ENCODE measurements at regions of chr11 and their contacts with region 1.

Region 1: GRCh38 chr11:87037450-87038234 is at the start of gene TMEM135:
- DNase-seq: peak; percentile 94
- H3K4me3 ChIP-seq: peak within 1 kb of the TSS; percentile 32 to 70 (median 67)
- H3K27ac ChIP-seq: peak within 1 kb of the TSS; percentile 1
- H3K4me1 ChIP-seq: peaks cover 12% of the 10 kb centered on the region
- H3K27me3 ChIP-seq: no peaks in the 10 kb centered on the region
- CTCF ChIP-seq: no peak
- POLR2A ChIP-seq: peak; percentile 93
- total RNA-seq, gene TMEM135: 33.2 and 36.8 TPM in 2 replicates

Region 2: GRCh38 chr11:86811637-86812321 is 225.9 kb before region 1 on chr11:
- CTCF ChIA-PET with region 1: no interaction called
- POLR2A ChIA-PET with region 1: no interaction called
- dilution Hi-C with region 1: no loop called
- intact Hi-C with region 1: no loop called
- DNase-seq: peak; percentile 24
- H3K4me3 ChIP-seq: no peak overlapping the region
- H3K27ac ChIP-seq: no peak overlapping the region
- H3K4me1 ChIP-seq: peaks cover 32% of the 10 kb centered on the region
- H3K27me3 ChIP-seq: no peaks in the 10 kb centered on the region
- CTCF ChIP-seq: no peak
- POLR2A ChIP-seq: peak; percentile 49

Region 3: DNA sequence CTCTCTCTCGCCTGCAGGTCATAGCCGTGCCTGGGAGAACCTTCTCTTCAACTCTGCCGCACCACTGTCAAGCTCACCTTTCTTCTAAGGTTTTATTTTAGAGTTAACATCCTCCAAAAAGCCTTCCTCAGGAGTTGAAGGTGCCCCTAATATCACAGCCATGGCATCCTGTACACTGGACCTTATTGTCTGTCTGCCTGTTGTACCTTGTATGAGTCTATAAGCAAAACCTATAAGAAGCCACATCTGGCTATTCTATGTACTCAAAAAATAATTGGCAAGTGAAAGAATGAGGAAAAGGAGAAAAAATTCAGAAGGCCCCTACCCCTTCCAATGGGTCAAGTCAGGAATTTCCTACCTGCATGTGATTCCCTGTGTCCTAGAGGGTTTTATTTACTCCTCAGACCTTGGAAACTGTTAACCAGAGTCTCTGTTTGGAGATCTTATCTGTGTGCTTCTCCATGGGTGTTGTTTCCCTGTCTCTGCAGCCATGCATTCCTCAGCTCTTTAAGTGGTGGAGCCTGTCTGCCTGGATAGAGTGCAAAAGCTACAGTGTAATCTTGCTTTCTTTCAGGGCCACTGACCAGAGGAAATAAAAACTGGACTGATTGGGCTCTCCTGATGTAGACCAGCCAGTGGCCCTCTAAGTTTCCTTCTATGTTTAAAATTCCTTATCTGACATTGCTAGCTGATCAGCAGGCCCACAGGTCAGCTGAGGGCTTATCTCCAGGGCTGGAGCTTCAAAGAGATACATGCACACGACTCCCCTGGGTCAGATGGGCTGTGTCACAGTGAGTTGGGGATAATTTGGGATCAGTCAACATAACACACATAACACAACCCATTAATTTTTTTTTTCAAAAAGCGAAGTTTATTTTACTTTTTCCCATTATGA is 37.5 kb before region 1 on chr11:
- CTCF ChIA-PET with region 1: interaction called, 19 read pairs
- POLR2A ChIA-PET with region 1: interaction called, 14 read pairs
- dilution Hi-C with region 1: no loop called
- intact Hi-C with region 1: loop called (anchors 1 kb)
- DNase-seq: peak; percentile 31
- H3K4me3 ChIP-seq: no peak overlapping the region
- H3K27ac ChIP-seq: no peak overlapping the region
- H3K4me1 ChIP-seq: no peaks in the 10 kb centered on the region
- H3K27me3 ChIP-seq: no peaks in the 10 kb centered on the region
- CTCF ChIP-seq: no peak
- POLR2A ChIP-seq: no peak

Region 4: DNA sequence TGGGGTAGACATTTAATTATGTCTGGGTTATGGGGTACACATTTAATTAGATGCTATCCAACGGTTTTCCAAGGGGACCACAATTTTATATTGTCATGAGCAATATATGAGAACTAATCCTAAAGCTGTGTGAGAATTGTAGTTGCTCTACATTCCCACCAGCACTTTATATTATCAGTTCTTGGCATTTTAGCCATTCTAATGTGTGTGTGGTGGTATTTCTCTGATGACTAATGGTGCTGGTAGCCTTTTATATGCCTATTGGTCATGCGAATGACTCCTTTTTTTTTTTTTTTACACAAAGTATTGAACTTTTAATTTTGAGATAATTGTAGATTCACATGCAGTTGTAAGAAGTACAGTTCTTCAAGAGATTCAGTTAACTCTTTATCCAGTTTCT is 26.3 kb after region 1 on chr11:
- CTCF ChIA-PET with region 1: interaction called, 4 read pairs
- POLR2A ChIA-PET with region 1: no interaction called
- dilution Hi-C with region 1: no loop called
- intact Hi-C with region 1: loop called (anchors 2 kb)
- DNase-seq: no peak
- H3K4me3 ChIP-seq: no peak overlapping the region
- H3K27ac ChIP-seq: no peak overlapping the region
- H3K4me1 ChIP-seq: no peaks in the 10 kb centered on the region
- H3K27me3 ChIP-seq: no peaks in the 10 kb centered on the region
- CTCF ChIP-seq: no peak
- POLR2A ChIP-seq: no peak

Region 5: DNA sequence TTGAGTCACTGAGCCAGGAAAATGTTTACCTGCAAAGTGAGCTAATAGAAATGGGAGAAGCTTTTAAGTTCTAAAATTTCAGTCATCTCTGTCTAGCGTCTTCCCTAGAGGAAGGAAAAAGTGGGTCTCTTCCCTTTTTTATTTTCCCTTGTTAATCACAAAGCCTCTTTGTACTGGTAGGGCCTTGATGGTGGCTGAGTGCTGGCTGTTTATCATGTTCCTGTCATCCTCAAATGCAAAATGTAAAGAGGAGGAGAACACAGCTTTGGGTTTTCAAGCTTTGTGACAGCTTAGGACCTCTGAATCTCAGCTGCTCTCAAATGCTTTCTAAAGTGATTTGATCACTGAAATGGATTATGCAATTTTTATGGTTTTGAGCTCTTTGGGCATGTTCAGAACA is 222.1 kb after region 1 on chr11:
- CTCF ChIA-PET with region 1: no interaction called
- POLR2A ChIA-PET with region 1: no interaction called
- dilution Hi-C with region 1: no loop called
- intact Hi-C with region 1: loop called (anchors 5 kb)
- DNase-seq: no peak
- H3K4me3 ChIP-seq: no peak overlapping the region
- H3K27ac ChIP-seq: no peak overlapping the region
- H3K4me1 ChIP-seq: peaks cover 29% of the 10 kb centered on the region
- H3K27me3 ChIP-seq: no peaks in the 10 kb centered on the region
- CTCF ChIP-seq: no peak
- POLR2A ChIP-seq: no peak

Region 6: DNA sequence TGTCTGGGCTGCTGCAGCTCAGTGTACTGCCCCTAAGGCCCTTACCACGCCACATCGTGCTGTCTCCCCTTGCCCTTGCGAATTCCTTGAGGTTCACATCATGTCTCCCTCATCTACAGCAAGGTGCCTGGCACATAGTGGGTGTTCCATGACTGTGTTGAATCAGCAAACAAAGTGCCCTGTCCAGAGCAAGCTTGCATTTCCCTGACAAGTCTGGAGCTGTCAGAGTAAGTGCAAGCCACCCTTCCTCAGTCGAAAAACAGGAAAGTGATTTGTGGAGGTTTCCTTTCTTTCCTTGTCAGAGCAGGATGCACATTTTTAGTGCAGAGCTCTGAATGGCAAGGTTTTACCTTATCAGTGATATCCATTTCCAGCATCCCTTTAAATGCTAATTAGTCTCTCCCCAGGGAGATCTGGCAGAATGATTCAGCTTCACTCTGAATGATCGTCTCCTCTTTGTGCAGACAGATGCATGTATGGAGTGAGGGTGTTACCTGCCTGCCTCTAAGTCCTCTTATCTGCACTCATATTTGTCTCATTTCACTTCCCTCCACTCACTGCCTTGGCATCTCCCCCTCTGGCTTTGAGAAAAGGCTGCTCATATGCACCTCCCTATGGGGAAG is 331.3 kb after region 1 on chr11:
- CTCF ChIA-PET with region 1: no interaction called
- POLR2A ChIA-PET with region 1: no interaction called
- dilution Hi-C with region 1: no loop called
- intact Hi-C with region 1: no loop called
- DNase-seq: peak; percentile 97
- H3K4me3 ChIP-seq: peak overlapping the region in 1 of 3 experiments; percentile 5
- H3K27ac ChIP-seq: peak overlapping the region; percentile 94
- H3K4me1 ChIP-seq: peaks cover 47% of the 10 kb centered on the region
- H3K27me3 ChIP-seq: no peaks in the 10 kb centered on the region
- CTCF ChIP-seq: no peak
- POLR2A ChIP-seq: peak; percentile 65

Region 7: DNA sequence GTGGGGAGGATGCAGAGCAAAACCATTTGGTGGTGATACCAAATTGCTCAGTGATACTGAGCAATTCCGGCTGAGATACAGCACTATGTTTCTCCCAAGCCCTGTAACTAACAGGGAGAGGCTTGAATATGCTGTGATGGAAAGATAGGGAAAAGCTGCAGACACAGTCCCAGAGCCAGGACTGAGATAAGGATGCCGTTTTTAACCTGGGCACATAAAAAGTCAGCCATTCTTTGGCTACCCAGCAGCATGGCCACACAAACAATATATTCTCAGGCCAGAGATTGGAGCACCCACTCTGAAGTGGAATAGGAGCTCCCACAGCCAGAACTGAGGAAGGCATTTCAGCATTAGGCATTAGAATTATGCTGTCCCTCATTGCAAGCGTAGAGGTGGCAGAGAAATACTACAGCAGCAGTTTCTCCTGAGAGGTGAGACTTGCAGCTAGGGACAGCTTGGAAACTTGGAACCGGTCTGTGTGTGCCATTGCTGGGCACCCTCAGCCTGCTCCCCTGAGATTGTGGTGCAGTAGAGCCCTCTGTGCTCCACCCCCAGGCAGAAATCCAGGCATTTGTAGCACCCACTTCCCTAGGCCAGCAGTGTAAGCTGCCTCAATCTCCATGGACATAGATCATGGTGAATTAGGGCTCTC is 346.6 kb after region 1 on chr11:
- CTCF ChIA-PET with region 1: no interaction called
- POLR2A ChIA-PET with region 1: no interaction called
- dilution Hi-C with region 1: no loop called
- intact Hi-C with region 1: no loop called
- DNase-seq: no peak
- H3K4me3 ChIP-seq: no peak overlapping the region
- H3K27ac ChIP-seq: no peak overlapping the region
- H3K4me1 ChIP-seq: no peaks in the 10 kb centered on the region
- H3K27me3 ChIP-seq: no peaks in the 10 kb centered on the region
- CTCF ChIP-seq: no peak
- POLR2A ChIP-seq: no peak